ENCODE measurements at regions of chr2 and their contacts with region 1.

Region 1: DNA sequence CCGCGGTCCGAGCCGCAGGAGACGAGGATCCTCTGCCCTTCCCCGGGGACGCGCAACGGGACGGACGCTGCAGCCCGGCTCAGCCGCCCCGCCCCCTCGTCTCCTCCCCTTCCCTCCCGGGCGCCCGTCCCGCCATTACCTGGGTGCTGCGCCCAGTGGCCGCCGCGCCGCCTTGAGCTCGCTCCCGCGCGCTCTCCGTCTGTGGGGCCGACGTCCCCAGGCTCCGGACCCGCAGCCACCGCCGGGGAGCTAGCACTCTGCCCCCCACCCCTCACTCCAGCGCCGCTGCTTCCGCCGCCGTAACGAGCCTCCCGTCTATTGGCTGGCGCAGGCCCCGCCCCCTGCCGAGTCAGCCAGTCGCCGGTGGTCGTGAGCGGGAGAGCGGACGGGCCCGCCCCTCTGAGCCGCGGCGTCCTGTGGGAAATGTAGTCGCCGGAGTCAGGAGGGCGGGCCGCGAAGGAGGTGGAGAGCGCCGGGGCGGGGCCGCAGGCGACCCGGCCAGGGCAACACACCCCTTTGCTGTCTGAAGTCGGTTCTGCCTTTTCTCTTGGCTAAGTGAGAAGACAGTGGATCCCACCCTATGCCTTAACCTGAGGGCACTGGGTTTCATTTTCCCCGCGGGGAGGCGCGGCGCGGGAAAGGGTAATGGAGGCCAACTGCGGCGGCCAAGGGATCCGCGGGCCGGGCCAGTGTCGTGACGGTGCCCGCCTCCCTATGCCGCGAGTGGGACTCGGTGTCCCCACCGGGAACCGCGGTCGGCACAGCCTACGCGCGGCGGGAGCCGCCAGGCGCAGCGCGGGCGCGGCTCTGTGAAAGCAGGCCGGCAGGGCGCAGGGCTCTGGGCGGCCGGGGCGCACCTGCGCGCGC is at the start of gene SAP130:
- DNase-seq: peak; percentile 95 to 99
- H3K4me3 ChIP-seq: peak within 1 kb of the TSS; percentile 69 to 100
- H3K27ac ChIP-seq: peak within 1 kb of the TSS; percentile 94 to 99
- H3K4me1 ChIP-seq: peaks cover 0 to 12% of the 10 kb centered on the region in 2 donors
- H3K27me3 ChIP-seq: no peaks in the 10 kb centered on the region
- CTCF ChIP-seq: no peak
- total RNA-seq, gene SAP130: 2.8 TPM

Region 2: GRCh38 chr2:127064642-127065250 is 963.3 kb before region 1 on chr2:
- intact Hi-C with region 1: loop called (anchors 10 kb)
- DNase-seq: peak; percentile 88 to 97
- H3K4me3 ChIP-seq: peak overlapping the region in 1 of 2 donors; percentile 25
- H3K27ac ChIP-seq: peak overlapping the region; percentile 70 to 82
- H3K4me1 ChIP-seq: peaks cover 9 to 16% of the 10 kb centered on the region in 2 donors
- H3K27me3 ChIP-seq: no peaks in the 10 kb centered on the region
- CTCF ChIP-seq: peak in 1 of 3 experiments; percentile 39

Region 3: GRCh38 chr2:127810619-127811396 is 217.2 kb before region 1 on chr2 and contains the start of gene WDR33:
- intact Hi-C with region 1: loop called (anchors 2 kb)
- DNase-seq: peak; percentile 57 to 90
- H3K4me3 ChIP-seq: peak within 1 kb of the TSS; percentile 67 to 70
- H3K27ac ChIP-seq: peak within 1 kb of the TSS; percentile 79 to 87
- H3K4me1 ChIP-seq: peaks cover 0 to 26% of the 10 kb centered on the region in 2 donors
- H3K27me3 ChIP-seq: no peaks in the 10 kb centered on the region
- CTCF ChIP-seq: no peak
- total RNA-seq, gene WDR33: 13.9 TPM

Region 4: DNA sequence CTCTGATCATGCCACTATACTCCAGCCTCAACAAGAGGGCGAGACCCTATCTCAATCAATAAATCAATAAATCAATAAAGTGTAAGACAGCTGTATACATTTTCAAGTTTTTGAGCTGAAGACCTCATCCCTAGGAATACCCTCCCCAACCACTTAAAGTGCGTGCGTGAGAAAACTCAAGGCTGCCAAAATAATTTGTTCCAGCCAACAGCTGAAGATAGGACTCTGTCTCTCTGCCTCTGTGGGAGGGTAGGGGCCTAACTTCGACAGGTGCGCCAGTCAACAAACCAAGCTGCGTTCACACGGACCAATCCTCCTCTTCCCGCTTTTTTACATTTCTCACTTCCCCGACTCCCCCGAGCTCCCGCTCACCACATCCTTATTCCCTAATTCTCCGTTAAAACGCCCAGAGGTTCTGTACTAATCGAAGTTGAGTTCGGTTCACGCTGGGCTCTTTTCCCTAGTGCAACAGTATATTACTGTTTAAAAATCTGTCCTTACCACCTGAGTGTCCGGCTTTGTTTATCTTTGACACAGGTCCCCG is 170.7 kb before region 1 on chr2:
- intact Hi-C with region 1: loop called (anchors 10 kb)
- DNase-seq: no peak
- H3K4me3 ChIP-seq: peak overlapping the region; percentile 78 to 96
- H3K27ac ChIP-seq: peak overlapping the region; percentile 67 to 81
- H3K4me1 ChIP-seq: peaks cover 0 to 9% of the 10 kb centered on the region in 2 donors
- H3K27me3 ChIP-seq: no peaks in the 10 kb centered on the region
- CTCF ChIP-seq: no peak

Region 5: GRCh38 chr2:127884436-127885345 is 143.3 kb before region 1 on chr2:
- intact Hi-C with region 1: loop called (anchors 5 kb)
- DNase-seq: no peak
- H3K4me3 ChIP-seq: peak overlapping the region; percentile 67 to 69
- H3K27ac ChIP-seq: peak overlapping the region; percentile 85 to 88
- H3K4me1 ChIP-seq: peaks cover 9 to 33% of the 10 kb centered on the region in 2 donors
- H3K27me3 ChIP-seq: no peaks in the 10 kb centered on the region
- CTCF ChIP-seq: no peak

Region 6: GRCh38 chr2:128090945-128091725 is 63.1 kb after region 1 on chr2 and contains the start of gene UGGT1:
- intact Hi-C with region 1: loop called (anchors 1 kb)
- DNase-seq: peak; percentile 72 to 96
- H3K4me3 ChIP-seq: peak within 1 kb of the TSS; percentile 83 to 89
- H3K27ac ChIP-seq: peak within 1 kb of the TSS; percentile 74 to 75
- H3K4me1 ChIP-seq: peaks cover 0 to 4% of the 10 kb centered on the region in 2 donors
- H3K27me3 ChIP-seq: no peaks in the 10 kb centered on the region
- CTCF ChIP-seq: no peak
- total RNA-seq, gene UGGT1: 42.0 TPM

Region 7: DNA sequence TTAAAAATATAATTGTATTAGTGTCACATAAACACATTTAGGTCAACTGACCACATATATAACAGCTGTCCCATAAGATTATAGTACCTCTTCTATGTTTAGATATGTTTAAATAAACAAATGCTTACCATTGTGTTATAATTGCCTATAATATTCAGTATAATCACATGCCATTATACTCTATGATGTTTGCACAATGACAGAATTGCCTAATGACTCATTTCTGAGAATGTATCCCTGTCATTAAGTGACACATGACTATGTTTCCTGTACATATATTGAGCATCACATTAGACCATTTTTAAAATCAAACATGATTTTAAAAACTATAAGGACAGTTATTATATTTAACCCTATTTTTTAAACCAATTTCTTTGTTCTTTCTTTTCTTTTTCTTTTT is 200.9 kb after region 1 on chr2:
- intact Hi-C with region 1: no loop called
- DNase-seq: no peak
- H3K4me3 ChIP-seq: no peak overlapping the region
- H3K27ac ChIP-seq: no peak overlapping the region
- H3K4me1 ChIP-seq: peaks cover 0 to 6% of the 10 kb centered on the region in 2 donors
- H3K27me3 ChIP-seq: no peaks in the 10 kb centered on the region
- CTCF ChIP-seq: no peak

Measured in ascending aorta (tissue), 2 donors.